Caco-2 (cell line): ENCODE measurements at regions of chr1 and their contacts with region 1.

Region 1: DNA sequence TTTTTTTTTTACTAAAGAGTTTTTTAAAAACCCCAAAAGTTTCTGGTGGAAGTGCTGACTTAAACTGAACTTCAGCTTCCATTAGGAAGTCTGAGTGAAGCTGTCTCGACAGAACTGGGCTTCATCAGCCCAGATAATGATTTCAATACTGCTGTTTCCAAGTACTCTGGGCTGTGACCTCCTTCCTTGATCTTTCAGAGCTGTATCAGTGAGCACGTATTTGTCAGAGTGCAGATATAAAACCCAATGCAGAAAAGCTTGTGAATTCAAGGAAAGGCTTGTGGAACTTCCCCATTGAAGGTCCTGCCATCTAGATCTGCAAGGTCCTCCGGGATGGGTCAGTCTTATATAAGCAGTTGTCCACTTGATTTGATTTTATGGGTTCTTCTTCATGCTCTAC is 50.1 kb upstream of the RGS21 start:
- DNase-seq: no peak
- H3K4me3 ChIP-seq: no peak overlapping the region
- H3K4me3 Mint-ChIP-seq: no peak overlapping the region
- H3K27ac Mint-ChIP-seq: no peak overlapping the region
- H3K4me1 ChIP-seq: no peaks in the 10 kb centered on the region
- H3K4me1 Mint-ChIP-seq: no peaks in the 10 kb centered on the region
- H3K27me3 ChIP-seq: no peaks in the 10 kb centered on the region
- H3K27me3 Mint-ChIP-seq: peaks cover 7% of the 10 kb centered on the region
- CTCF ChIP-seq: no peak

Region 2: GRCh38 chr1:192343344-192343743 is 76.7 kb after region 1 on chr1:
- CTCF ChIA-PET with region 1: no interaction called
- POLR2A ChIA-PET with region 1: interaction called, 20 read pairs
- intact Hi-C with region 1: no loop called
- DNase-seq: no peak
- H3K4me3 ChIP-seq: no peak overlapping the region
- H3K4me3 Mint-ChIP-seq: no peak overlapping the region
- H3K27ac Mint-ChIP-seq: no peak overlapping the region
- H3K4me1 ChIP-seq: no peaks in the 10 kb centered on the region
- H3K4me1 Mint-ChIP-seq: no peaks in the 10 kb centered on the region
- H3K27me3 ChIP-seq: no peaks in the 10 kb centered on the region
- H3K27me3 Mint-ChIP-seq: no peaks in the 10 kb centered on the region
- CTCF ChIP-seq: no peak